Naive thymus-derived CD4-positive, alpha-beta T cell (primary cell): ENCODE measurements at regions of chr19 and their contacts with region 1.

Region 1: GRCh38 chr19:40444192-40445028 is at the start of gene SERTAD3:
- DNase-seq: peak; percentile 94 to 99 (median 98)
- ATAC-seq: peak; percentile 82
- H3K4me3 ChIP-seq: peak within 1 kb of the TSS; percentile 97
- H3K4me3 Mint-ChIP-seq: peak within 1 kb of the TSS; percentile 96 to 100 (median 98)
- H3K27ac ChIP-seq: peak within 1 kb of the TSS; percentile 89
- H3K27ac Mint-ChIP-seq: peak within 1 kb of the TSS; percentile 94 to 99 (median 97)
- H3K4me1 ChIP-seq: peaks cover 8 to 12% of the 10 kb centered on the region in 2 donors
- H3K4me1 Mint-ChIP-seq: peaks cover 17 to 31% (median 21%) of the 10 kb centered on the region in 7 donors
- H3K27me3 ChIP-seq: no peaks in the 10 kb centered on the region
- H3K27me3 Mint-ChIP-seq: no peaks in the 10 kb centered on the region
- total RNA-seq, gene SERTAD3: 15.2 to 44.1 (median 17.8) TPM

Region 2: DNA sequence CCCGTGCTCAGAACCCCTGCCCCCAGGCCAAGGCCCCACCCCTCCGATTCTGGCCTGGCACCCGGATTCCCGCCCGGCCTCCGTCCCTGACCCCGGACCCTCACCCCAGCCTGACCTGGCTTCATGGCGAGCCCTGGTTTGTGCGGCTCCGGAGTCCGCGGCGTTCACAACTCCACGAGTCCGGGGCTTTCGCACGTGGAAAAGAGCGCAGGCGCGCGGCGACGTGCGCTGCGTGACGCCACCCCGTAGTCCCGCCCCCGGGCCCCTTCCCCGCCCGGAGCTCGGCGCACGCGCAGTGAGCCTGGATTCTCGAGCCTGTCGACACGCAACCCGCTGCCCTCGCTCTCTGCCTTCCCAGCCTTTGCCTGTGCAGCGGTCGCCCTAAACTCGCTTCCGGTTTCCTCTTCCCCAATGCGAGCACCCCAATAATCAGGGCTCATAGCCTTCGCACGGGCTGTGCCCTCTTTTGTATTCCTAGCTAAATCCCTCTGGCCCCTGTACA is 598.2 kb before region 1 on chr19 and contains the start of gene FBL:
- CTCF ChIA-PET with region 1: no interaction called
- POLR2A ChIA-PET with region 1: no interaction called
- intact Hi-C with region 1: loop called in 1 of 2 experiments (anchors 5 kb)
- DNase-seq: peak; percentile 93 to 99 (median 97)
- ATAC-seq: peak; percentile 95
- H3K4me3 ChIP-seq: peak within 1 kb of the TSS; percentile 95
- H3K4me3 Mint-ChIP-seq: peak within 1 kb of the TSS; percentile 82 to 95 (median 92)
- H3K27ac ChIP-seq: peak within 1 kb of the TSS; percentile 94
- H3K27ac Mint-ChIP-seq: peak within 1 kb of the TSS; percentile 86 to 99 (median 95)
- H3K4me1 ChIP-seq: peaks cover 13 to 43% of the 10 kb centered on the region in 2 donors
- H3K4me1 Mint-ChIP-seq: peaks cover 38 to 55% (median 45%) of the 10 kb centered on the region in 7 donors
- H3K27me3 ChIP-seq: no peaks in the 10 kb centered on the region
- H3K27me3 Mint-ChIP-seq: peaks cover 0 to under 1% (median 0%) of the 10 kb centered on the region in 5 donors
- total RNA-seq, gene FBL: 237 to 387 (median 369) TPM

Region 3: DNA sequence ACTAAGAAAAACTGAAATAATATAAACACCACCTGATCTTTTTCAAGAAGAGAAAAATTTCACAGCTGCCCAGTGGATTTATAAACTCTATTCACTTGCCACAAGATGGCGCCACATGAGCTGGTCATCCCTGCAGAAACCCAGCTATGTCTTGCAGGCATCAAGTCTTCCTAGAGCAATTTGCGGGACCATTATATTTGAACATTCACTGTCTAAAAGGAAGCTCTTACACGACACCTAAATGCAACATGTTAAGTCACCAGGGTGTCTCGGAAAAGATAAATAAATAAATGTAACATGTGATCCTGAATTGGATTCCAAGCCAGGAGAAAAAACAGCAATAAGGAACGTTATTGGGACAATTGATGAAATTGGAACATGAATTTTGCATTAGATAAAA is 139.0 kb before region 1 on chr19:
- CTCF ChIA-PET with region 1: no interaction called
- POLR2A ChIA-PET with region 1: no interaction called
- intact Hi-C with region 1: loop called in 1 of 2 experiments (anchors 1 kb)
- DNase-seq: peak; percentile 39 to 75 (median 63)
- ATAC-seq: peak; percentile 80
- H3K4me3 ChIP-seq: no peak overlapping the region
- H3K4me3 Mint-ChIP-seq: no peak overlapping the region
- H3K27ac ChIP-seq: no peak overlapping the region
- H3K27ac Mint-ChIP-seq: no peak overlapping the region
- H3K4me1 ChIP-seq: no peaks in the 10 kb centered on the region
- H3K4me1 Mint-ChIP-seq: peaks cover 0 to 5% (median 4%) of the 10 kb centered on the region in 7 donors
- H3K27me3 ChIP-seq: no peaks in the 10 kb centered on the region
- H3K27me3 Mint-ChIP-seq: no peaks in the 10 kb centered on the region

Region 4: DNA sequence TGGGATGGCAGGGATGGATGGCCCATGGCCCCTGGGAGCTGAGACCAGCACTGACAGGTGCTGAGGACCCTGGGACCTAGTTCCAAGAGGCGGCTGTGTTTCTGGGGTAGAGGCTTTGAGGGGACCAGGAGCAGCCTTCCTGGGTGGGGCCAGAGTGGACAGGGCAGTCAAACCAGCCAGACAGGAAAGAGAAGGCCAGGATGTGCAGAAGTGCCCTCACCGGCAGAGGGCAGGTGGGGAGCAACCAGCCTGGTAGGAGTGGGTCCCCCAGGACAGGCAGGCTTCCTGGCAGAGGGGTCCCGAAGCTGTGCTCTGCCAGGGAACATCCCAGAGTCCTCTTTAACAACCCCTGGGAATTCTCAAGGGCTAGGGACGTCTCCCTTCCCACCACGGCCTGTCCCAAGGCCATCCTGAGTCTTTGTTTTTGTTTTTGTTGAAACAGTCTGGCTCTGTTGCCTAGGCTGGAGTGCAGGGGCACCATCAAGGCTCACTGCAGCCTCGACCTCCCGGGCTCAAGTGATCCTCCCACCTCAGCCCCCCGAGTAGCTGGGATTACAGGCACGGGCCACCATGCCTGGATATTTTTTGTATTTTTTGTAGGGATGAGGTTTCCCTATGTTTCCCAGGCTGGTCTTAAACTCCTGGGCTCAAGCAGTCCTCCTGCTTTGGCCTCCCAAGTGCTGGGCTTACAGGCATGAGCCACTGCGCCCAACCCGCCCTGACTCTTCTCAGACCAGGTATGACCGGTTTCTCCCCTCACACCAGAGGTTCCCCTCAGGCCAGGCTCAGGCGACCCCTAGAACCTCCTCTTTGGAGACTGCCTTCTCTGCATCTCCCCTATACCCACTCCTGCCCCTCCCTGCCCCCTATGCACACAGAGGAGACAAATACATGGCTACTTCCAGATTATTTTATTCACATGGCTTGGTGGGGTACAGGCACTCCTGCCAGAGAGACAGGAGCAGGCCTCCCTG is 51.3 kb before region 1 on chr19:
- CTCF ChIA-PET with region 1: no interaction called
- POLR2A ChIA-PET with region 1: no interaction called
- intact Hi-C with region 1: no loop called
- DNase-seq: no peak
- ATAC-seq: no peak
- H3K4me3 ChIP-seq: no peak overlapping the region
- H3K4me3 Mint-ChIP-seq: no peak overlapping the region
- H3K27ac ChIP-seq: no peak overlapping the region
- H3K27ac Mint-ChIP-seq: no peak overlapping the region
- H3K4me1 ChIP-seq: no peaks in the 10 kb centered on the region
- H3K4me1 Mint-ChIP-seq: peaks cover 0 to 2% (median 0%) of the 10 kb centered on the region in 7 donors
- H3K27me3 ChIP-seq: no peaks in the 10 kb centered on the region
- H3K27me3 Mint-ChIP-seq: no peaks in the 10 kb centered on the region

Region 5: DNA sequence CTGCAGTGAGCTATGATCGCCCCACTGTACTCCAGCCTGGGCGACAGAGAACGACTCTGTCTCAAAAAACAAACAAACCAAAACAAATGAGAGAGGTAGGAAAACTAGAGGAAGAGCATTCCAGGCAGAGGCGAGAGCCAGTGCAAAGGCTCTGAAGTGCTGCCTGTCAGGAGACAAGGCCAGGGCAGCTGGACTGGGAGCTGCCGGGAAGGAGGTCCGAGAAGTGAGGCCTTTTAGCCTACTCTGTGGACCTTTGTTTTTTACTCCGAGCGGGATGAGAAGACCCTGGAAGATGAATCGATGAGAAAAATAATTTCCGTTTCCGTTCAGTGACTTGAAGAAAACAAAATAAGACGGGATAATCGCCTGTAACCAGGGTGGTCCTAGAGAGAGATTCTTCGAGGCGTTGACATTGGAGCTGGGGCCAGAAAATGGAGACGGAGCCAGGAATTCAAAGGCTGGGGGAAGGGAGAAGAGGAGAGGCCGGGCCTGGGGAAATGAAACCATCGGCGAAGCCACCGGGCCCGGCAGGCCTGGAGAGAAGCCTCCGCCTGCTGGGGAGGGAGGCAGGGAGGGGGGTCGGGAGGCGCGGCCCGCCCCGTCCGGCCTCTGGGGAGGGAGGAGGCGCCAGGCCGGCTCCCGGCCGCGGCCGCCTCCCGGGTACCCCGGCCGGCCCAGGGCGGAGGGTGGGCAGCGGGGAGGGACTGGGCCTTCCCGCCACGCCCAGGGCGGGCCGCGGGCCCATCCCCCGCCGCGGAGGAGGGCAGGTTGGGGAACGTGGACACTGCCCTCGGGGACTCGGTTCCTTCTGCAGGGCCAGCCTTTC is 10.8 kb before region 1 on chr19:
- CTCF ChIA-PET with region 1: interaction called, 9 read pairs
- POLR2A ChIA-PET with region 1: interaction called, 66 read pairs
- intact Hi-C with region 1: loop called (anchors 1 kb)
- DNase-seq: peak in 8 of 9 donors; percentile 42 to 70 (median 52)
- ATAC-seq: peak; percentile 94
- H3K4me3 ChIP-seq: peak overlapping the region; percentile 53
- H3K4me3 Mint-ChIP-seq: peak overlapping the region; percentile 88 to 98 (median 95)
- H3K27ac ChIP-seq: peak overlapping the region; percentile 77
- H3K27ac Mint-ChIP-seq: peak overlapping the region; percentile 97 to 99 (median 98)
- H3K4me1 ChIP-seq: peaks cover 5 to 6% of the 10 kb centered on the region in 2 donors
- H3K4me1 Mint-ChIP-seq: peaks cover 0 to 25% (median 12%) of the 10 kb centered on the region in 7 donors
- H3K27me3 ChIP-seq: no peaks in the 10 kb centered on the region
- H3K27me3 Mint-ChIP-seq: no peaks in the 10 kb centered on the region

Region 6: GRCh38 chr19:40609561-40610395 is 165.4 kb after region 1 on chr19:
- CTCF ChIA-PET with region 1: no interaction called
- POLR2A ChIA-PET with region 1: interaction called, 5 read pairs
- intact Hi-C with region 1: loop called (anchors 1 kb)
- DNase-seq: peak; percentile 67 to 96 (median 78)
- ATAC-seq: peak; percentile 64
- H3K4me3 ChIP-seq: peak overlapping the region; percentile 63
- H3K4me3 Mint-ChIP-seq: peak overlapping the region; percentile 75 to 92 (median 86)
- H3K27ac ChIP-seq: peak overlapping the region; percentile 74
- H3K27ac Mint-ChIP-seq: peak overlapping the region; percentile 89 to 100 (median 92)
- H3K4me1 ChIP-seq: peaks cover 35 to 45% of the 10 kb centered on the region in 2 donors
- H3K4me1 Mint-ChIP-seq: peaks cover 20 to 78% (median 63%) of the 10 kb centered on the region in 7 donors
- H3K27me3 ChIP-seq: no peaks in the 10 kb centered on the region
- H3K27me3 Mint-ChIP-seq: peaks cover 0 to 8% (median 0%) of the 10 kb centered on the region in 5 donors

Region 7: DNA sequence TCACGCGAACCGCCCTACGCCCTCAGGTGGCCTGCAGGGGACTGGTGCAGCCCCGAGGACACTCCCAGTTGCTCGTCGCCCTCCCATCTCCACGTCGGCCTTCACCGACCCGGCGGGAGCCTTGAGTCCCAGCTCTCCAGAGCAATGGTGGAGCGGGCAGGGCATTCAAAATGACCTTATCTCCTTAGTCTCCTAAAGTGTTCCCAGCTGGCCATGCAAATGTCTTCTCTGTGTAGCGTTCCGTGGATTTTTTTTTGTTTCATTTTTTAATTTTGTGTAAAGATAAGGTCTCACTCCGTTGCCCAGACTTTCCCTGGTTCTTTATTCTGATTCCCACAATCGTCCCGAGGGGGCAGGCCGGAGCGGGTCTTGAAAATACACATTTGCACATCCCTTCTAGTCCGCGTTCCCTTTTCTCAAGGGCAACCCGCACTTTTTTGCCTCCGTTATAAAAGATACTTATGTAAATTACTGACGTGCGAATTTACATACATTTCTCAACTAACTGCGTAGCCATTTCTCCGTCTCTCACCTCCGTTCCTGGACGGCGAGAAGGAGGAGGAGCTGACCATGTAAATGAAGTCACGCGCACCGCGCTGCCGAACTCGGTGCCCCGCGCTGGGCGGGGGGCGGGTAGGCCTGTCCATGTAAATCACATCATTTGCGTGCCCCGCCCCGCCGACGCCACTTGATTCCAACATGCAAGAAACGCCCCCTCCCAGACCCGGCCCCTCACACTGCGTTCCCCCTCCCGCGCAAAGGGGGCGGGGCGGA is 354.0 kb after region 1 on chr19:
- CTCF ChIA-PET with region 1: no interaction called
- POLR2A ChIA-PET with region 1: no interaction called
- intact Hi-C with region 1: loop called (anchors 1 to 5 kb)
- DNase-seq: peak; percentile 48 to 100 (median 100)
- ATAC-seq: peak; percentile 92
- H3K4me3 ChIP-seq: peak overlapping the region; percentile 77
- H3K4me3 Mint-ChIP-seq: peak overlapping the region; percentile 89 to 100 (median 95)
- H3K27ac ChIP-seq: peak overlapping the region; percentile 90
- H3K27ac Mint-ChIP-seq: peak overlapping the region; percentile 96 to 100 (median 99)
- H3K4me1 ChIP-seq: peaks cover 35 to 39% of the 10 kb centered on the region in 2 donors
- H3K4me1 Mint-ChIP-seq: peaks cover 28 to 56% (median 48%) of the 10 kb centered on the region in 7 donors
- H3K27me3 ChIP-seq: no peaks in the 10 kb centered on the region
- H3K27me3 Mint-ChIP-seq: no peaks in the 10 kb centered on the region

Region 8: DNA sequence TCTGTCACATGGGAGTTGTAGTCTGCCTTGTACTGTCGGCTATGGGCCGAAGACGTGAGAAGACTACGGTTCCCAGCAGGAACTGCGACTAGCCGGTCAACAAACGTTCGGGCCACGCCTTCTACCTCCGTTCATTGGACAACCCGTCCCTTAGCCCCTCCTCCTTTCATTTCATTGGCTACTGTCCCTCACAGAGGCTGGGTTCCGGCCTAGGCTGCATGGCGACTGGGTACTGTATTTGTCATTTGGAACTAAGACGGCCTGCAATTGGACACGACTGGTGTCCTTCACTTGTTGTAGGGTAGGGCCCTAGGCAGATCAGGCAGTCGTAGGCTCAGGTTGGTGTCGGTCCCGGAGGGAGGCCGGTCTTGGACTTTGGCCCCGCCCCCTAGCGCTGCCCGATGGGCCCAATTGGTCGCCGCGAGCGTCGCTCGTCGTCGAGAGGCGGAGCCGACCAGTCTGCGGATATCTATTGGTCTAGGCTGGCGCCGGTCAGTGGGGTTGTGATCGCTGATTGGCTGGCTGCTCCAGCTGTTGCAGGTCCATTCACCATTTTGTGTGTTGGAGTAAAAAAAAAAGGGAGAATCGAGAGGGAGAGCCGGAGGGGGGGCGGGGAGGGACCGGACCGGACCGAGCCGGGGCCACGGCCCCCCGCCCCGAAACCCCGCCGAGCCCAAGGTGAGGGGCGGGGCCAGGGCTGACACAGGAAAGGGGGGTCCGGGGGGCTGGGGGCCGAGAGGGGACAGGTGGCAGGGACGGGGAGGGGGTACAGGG is 1824.5 kb after region 1 on chr19 and contains the start of gene CIC:
- CTCF ChIA-PET with region 1: no interaction called
- POLR2A ChIA-PET with region 1: no interaction called
- intact Hi-C with region 1: loop called in 1 of 2 experiments (anchors 2 kb)
- DNase-seq: peak; percentile 95 to 100 (median 99)
- ATAC-seq: peak; percentile 82
- H3K4me3 ChIP-seq: peak within 1 kb of the TSS; percentile 85
- H3K4me3 Mint-ChIP-seq: peak within 1 kb of the TSS in 1 of 10 donors; percentile 94
- H3K27ac ChIP-seq: peak within 1 kb of the TSS; percentile 96
- H3K27ac Mint-ChIP-seq: peak within 1 kb of the TSS in 4 of 9 donors; percentile 98 to 99 (median 99)
- H3K4me1 ChIP-seq: peaks cover 23 to 29% of the 10 kb centered on the region in 2 donors
- H3K4me1 Mint-ChIP-seq: peaks cover 8 to 31% (median 25%) of the 10 kb centered on the region in 7 donors
- H3K27me3 ChIP-seq: no peaks in the 10 kb centered on the region
- H3K27me3 Mint-ChIP-seq: no peaks in the 10 kb centered on the region
- total RNA-seq, gene CIC: 90.4 to 134 (median 102) TPM